Endothelial cell of umbilical vein (primary cell): ENCODE measurements at regions of chr18 and their contacts with region 1.

Region 1: DNA sequence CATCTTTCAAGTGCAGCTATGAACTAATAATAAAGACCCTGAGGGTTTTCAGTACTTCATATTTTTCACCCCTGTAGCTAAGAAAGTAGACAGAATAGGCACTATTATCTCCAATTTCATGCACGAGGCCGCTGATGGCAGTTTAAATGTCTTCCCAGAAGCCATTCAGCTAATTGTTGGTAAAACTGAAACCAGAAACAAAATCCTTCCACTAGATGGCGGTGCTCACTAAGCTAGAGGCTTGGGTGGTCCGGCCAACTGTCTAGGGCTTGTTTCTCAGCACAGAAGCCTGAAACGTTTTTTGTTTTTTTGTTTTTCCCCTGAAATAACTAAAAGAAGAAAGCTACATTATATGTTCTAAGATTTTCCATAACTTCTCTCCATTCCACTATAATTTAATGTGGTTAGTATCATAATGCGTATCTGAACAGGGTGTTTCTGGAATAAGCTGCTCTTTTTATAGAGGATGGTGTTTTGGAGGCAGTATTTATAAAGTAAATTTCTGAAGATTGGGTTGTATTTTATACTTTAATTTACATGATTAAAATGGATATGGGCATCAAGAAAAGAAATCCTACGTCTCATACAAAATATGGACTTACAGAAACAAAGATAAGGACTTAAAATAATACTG is 159.4 kb downstream of the PIK3C3 start:
- DNase-seq: peak; percentile 78
- H3K4me3 ChIP-seq: no peak overlapping the region
- H3K27ac ChIP-seq: no peak overlapping the region
- H3K4me1 ChIP-seq: no peaks in the 10 kb centered on the region
- H3K27me3 ChIP-seq: peaks cover 0 to 2% of the 10 kb centered on the region in 2 experiments
- CTCF ChIP-seq: peak; percentile 72 to 73
- POLR2A ChIP-seq: no peak

Region 2: GRCh38 chr18:41940506-41941215 is 173.8 kb before region 1 on chr18:
- CTCF ChIA-PET with region 1: no interaction called
- POLR2A ChIA-PET with region 1: no interaction called
- dilution Hi-C with region 1: no loop called
- intact Hi-C with region 1: no loop called
- DNase-seq: no peak
- H3K4me3 ChIP-seq: no peak overlapping the region
- H3K27ac ChIP-seq: no peak overlapping the region
- H3K4me1 ChIP-seq: no peaks in the 10 kb centered on the region
- H3K27me3 ChIP-seq: peaks cover 10 to 13% of the 10 kb centered on the region in 2 experiments
- CTCF ChIP-seq: no peak
- POLR2A ChIP-seq: no peak

Region 3: DNA sequence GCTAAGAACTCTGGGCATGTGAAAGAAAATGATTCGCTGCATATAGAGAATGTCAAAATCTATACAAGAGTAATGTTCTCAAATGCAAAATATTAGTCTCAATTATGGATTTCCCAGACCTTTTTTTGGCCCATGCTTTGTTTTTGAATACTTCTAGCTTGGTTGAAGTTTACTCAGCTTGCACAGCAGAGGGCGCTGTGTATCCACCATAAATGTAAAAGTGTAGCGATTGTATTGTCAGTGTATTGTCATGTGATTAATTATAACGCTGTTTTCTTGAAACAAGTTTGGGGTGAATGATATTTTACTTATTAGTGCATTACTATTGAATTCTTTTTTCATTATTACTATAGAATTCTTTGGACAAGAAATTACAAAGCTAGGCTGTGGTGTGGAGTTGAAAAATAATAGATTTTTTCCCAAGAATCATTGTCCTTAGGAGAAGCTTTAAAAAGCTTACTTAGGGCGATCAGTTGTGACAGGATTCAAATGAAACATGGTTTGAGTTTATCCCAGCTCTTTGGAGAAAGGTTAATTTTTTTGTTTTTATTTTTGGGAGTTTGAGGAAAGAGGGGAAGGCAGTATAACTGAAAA is 61.1 kb before region 1 on chr18:
- CTCF ChIA-PET with region 1: interaction called, 98 read pairs
- POLR2A ChIA-PET with region 1: no interaction called
- dilution Hi-C with region 1: no loop called
- intact Hi-C with region 1: loop called (anchors 1 kb)
- DNase-seq: peak; percentile 66
- H3K4me3 ChIP-seq: no peak overlapping the region
- H3K27ac ChIP-seq: no peak overlapping the region
- H3K4me1 ChIP-seq: peaks cover 5% of the 10 kb centered on the region
- H3K27me3 ChIP-seq: no peaks in the 10 kb centered on the region
- CTCF ChIP-seq: peak; percentile 63 to 67
- POLR2A ChIP-seq: no peak

Region 4: GRCh38 chr18:42100911-42101310 is 13.5 kb before region 1 on chr18:
- CTCF ChIA-PET with region 1: interaction called, 34 read pairs
- POLR2A ChIA-PET with region 1: no interaction called
- dilution Hi-C with region 1: no loop called
- intact Hi-C with region 1: no loop called
- DNase-seq: no peak
- H3K4me3 ChIP-seq: no peak overlapping the region
- H3K27ac ChIP-seq: no peak overlapping the region
- H3K4me1 ChIP-seq: no peaks in the 10 kb centered on the region
- H3K27me3 ChIP-seq: peaks cover 0 to 2% of the 10 kb centered on the region in 2 experiments
- CTCF ChIP-seq: no peak
- POLR2A ChIP-seq: no peak

Region 5: DNA sequence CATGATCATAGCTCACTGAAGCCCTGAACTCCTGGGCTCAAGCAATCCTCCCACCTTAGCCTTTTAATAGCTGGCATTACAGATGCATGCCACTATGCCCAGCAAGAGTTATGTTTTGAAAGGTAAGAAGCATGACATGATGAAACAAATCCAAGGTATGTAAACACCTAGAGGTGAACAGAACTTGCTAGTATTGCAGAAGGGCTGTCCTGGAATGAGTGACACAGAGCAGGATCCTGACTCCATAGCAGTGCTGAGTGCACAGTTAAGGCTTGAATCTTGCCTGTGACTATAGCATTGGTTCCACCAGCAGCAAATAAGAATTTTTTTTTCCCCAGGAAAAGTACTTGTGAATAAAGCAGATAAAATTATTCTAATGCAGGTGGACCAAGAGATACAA is 150.1 kb after region 1 on chr18:
- CTCF ChIA-PET with region 1: no interaction called
- POLR2A ChIA-PET with region 1: no interaction called
- dilution Hi-C with region 1: no loop called
- intact Hi-C with region 1: no loop called
- DNase-seq: no peak
- H3K4me3 ChIP-seq: no peak overlapping the region
- H3K27ac ChIP-seq: no peak overlapping the region
- H3K4me1 ChIP-seq: no peaks in the 10 kb centered on the region
- H3K27me3 ChIP-seq: no peaks in the 10 kb centered on the region
- CTCF ChIP-seq: no peak
- POLR2A ChIP-seq: no peak

Region 6: GRCh38 chr18:42298759-42299675 is 184.6 kb after region 1 on chr18:
- CTCF ChIA-PET with region 1: interaction called, 25 read pairs
- POLR2A ChIA-PET with region 1: no interaction called
- dilution Hi-C with region 1: no loop called
- intact Hi-C with region 1: loop called (anchors 2 kb)
- DNase-seq: peak; percentile 61
- H3K4me3 ChIP-seq: no peak overlapping the region
- H3K27ac ChIP-seq: no peak overlapping the region
- H3K4me1 ChIP-seq: no peaks in the 10 kb centered on the region
- H3K27me3 ChIP-seq: no peaks in the 10 kb centered on the region
- CTCF ChIP-seq: peak; percentile 72 to 78
- POLR2A ChIP-seq: no peak

Region 7: GRCh38 chr18:42813570-42813969 is 699.1 kb after region 1 on chr18:
- CTCF ChIA-PET with region 1: no interaction called
- POLR2A ChIA-PET with region 1: no interaction called
- dilution Hi-C with region 1: no loop called
- intact Hi-C with region 1: no loop called
- DNase-seq: no peak
- H3K4me3 ChIP-seq: no peak overlapping the region
- H3K27ac ChIP-seq: no peak overlapping the region
- H3K4me1 ChIP-seq: no peaks in the 10 kb centered on the region
- H3K27me3 ChIP-seq: no peaks in the 10 kb centered on the region
- CTCF ChIP-seq: no peak
- POLR2A ChIP-seq: no peak

Region 8: GRCh38 chr18:43396266-43396665 is 1281.8 kb after region 1 on chr18:
- CTCF ChIA-PET with region 1: interaction called, 4 read pairs
- POLR2A ChIA-PET with region 1: no interaction called
- dilution Hi-C with region 1: no loop called
- intact Hi-C with region 1: loop called (anchors 10 kb)
- DNase-seq: peak; percentile 3
- H3K4me3 ChIP-seq: no peak overlapping the region
- H3K27ac ChIP-seq: no peak overlapping the region
- H3K4me1 ChIP-seq: no peaks in the 10 kb centered on the region
- H3K27me3 ChIP-seq: no peaks in the 10 kb centered on the region
- CTCF ChIP-seq: no peak
- POLR2A ChIP-seq: no peak

Region 9: DNA sequence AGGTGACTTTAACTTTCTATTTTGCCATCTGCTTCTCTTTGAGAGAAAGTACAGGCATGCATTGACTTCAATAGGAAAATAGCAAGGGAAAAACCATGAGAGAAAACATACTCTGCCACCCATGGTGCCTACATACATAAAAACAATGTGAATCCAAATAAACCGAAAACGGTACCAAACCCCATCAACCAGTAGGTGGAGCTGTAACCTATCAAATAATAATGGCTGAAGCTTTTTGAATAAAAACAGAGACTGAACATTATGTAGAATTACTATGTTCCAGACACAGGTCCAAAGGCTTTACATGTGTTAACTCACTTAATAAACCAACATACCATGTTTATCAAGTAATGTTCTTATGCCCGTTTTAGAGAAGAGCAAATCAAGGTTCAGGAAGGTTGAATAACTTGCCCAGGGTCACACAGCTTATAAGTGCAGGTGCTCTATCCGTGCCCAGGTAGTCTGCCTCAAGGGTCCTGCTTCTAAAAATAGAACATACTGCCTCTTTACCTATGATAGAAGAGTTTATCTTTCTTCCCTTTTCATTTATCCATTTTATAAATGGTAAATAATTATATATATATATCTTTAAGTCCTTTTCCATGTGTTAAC is 1456.8 kb after region 1 on chr18:
- CTCF ChIA-PET with region 1: interaction called, 23 read pairs
- POLR2A ChIA-PET with region 1: no interaction called
- dilution Hi-C with region 1: no loop called
- intact Hi-C with region 1: no loop called
- DNase-seq: peak; percentile 65
- H3K4me3 ChIP-seq: no peak overlapping the region
- H3K27ac ChIP-seq: no peak overlapping the region
- H3K4me1 ChIP-seq: no peaks in the 10 kb centered on the region
- H3K27me3 ChIP-seq: no peaks in the 10 kb centered on the region
- CTCF ChIP-seq: peak; percentile 52 to 59
- POLR2A ChIP-seq: no peak

Region 10: DNA sequence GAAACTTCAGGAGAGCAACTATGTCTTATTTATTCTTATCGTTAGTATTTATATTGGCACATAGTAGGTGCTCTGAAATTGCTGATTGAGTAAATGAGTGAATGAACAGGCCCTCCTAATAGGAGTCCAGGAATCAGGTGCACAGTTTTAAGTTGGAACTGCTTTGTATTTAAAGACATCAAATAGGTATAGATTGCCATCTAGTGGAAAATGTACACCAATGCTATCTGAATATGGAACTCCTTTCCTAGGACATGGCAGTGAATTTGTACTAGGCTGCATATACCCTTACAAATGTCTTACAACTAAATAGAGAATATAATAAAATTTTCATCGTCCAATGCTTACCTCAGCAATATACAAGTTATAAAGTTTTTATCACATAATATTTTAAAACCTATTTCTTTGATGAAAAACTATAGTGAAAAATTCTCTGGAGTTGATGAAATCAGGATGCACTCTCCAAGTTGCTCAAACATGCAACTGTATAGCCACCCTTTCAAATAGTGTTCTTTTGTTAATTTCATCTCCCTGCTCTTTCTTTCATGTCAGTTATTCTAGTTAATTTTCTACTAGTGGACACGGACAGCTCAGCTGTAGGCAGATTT is 1481.8 kb after region 1 on chr18:
- CTCF ChIA-PET with region 1: interaction called, 50 read pairs
- POLR2A ChIA-PET with region 1: no interaction called
- dilution Hi-C with region 1: no loop called
- intact Hi-C with region 1: no loop called
- DNase-seq: peak; percentile 33
- H3K4me3 ChIP-seq: no peak overlapping the region
- H3K27ac ChIP-seq: no peak overlapping the region
- H3K4me1 ChIP-seq: no peaks in the 10 kb centered on the region
- H3K27me3 ChIP-seq: no peaks in the 10 kb centered on the region
- CTCF ChIP-seq: peak; percentile 15 to 35
- POLR2A ChIP-seq: no peak